Calu3 (cell line): ENCODE measurements at regions of chr1 and their contacts with region 1.

Region 1: DNA sequence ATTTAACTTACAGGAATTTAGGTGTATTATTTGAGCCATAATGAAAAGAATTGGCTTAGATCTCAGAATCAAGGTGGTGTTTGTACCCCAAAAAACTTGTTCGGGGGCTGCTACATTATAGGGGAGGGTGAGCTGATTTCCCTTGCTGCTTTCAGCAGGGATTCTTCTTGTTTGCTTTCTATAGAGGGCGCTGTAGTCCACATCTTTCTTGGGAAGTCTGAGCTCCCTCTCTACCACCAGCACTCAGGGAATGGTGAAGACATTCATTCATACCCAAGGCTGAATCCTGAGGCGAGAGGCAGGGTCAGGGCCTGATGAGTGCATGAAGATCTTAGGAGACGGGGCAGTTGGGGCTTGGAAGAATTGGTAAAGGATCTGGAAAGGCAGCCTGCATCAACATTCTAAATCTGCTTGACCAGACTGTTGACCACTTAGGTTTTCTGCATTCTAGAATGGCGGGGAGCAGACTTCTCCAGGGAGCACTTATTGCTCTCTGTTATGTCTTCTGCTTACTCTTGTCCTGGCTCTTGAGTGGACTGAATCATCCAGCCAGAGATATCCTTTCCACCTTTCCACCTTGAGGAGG is 18.9 kb downstream of the SPATA46 start:
- DNase-seq: peak; percentile 48
- H3K4me3 Mint-ChIP-seq: no peak overlapping the region
- H3K27ac Mint-ChIP-seq: no peak overlapping the region
- H3K4me1 Mint-ChIP-seq: no peaks in the 10 kb centered on the region
- H3K27me3 Mint-ChIP-seq: no peaks in the 10 kb centered on the region
- CTCF ChIP-seq: peak; percentile 70

Region 2: DNA sequence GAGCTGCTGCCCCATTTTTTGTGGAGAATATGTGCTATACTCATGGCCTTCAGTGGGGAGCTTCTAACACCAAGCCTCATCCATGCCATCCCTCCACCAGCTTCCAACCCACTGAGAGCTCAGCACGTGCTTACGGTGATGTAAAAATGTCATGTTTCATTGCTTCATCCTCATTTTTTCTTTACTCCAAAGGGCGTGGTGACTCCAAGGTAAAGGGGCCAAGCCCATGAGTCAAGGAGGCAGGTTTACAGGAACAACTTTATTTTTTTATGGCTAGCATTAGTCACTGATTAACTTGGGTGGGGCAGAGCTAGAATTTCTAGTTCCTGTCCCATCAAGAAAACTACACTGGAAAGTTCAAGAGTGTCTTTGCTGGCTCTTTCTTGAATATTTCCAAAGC is 23.6 kb after region 1 on chr1 and contains the start of gene C1orf226:
- CTCF ChIA-PET with region 1: interaction called, 12 read pairs
- intact Hi-C with region 1: no loop called
- DNase-seq: peak; percentile 84
- H3K4me3 Mint-ChIP-seq: peak within 1 kb of the TSS; percentile 12
- H3K27ac Mint-ChIP-seq: peak within 1 kb of the TSS; percentile 89
- H3K4me1 Mint-ChIP-seq: peaks cover 19% of the 10 kb centered on the region
- H3K27me3 Mint-ChIP-seq: no peaks in the 10 kb centered on the region
- CTCF ChIP-seq: no peak
- total RNA-seq, gene C1orf226: 10.5 and 14.1 TPM in 2 replicates

Region 3: DNA sequence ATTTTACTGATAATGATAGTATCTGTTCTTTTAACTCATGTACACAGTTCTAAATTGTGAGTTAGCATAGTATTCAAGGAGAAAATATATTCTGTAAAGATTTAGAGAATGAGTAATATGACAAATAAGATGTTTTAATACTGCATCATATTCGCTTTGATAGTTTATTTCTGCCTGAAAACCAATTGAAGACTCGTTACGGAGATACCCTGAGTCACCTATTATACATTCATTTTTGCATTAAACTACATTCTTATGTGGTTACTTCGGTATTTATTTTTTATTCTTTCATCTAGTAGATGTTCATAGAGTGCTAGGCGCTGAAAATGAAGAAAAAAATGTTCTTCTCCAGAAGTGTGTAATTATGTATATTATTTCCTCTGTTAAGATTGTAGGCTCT is 145.2 kb after region 1 on chr1:
- CTCF ChIA-PET with region 1: no interaction called
- intact Hi-C with region 1: loop called (anchors 10 kb)
- DNase-seq: no peak
- H3K4me3 Mint-ChIP-seq: no peak overlapping the region
- H3K27ac Mint-ChIP-seq: no peak overlapping the region
- H3K4me1 Mint-ChIP-seq: peaks cover 10% of the 10 kb centered on the region
- H3K27me3 Mint-ChIP-seq: no peaks in the 10 kb centered on the region
- CTCF ChIP-seq: no peak